HAP-1 (cell line): ENCODE measurements at regions of chr2 and their contacts with region 1.

Region 1: DNA sequence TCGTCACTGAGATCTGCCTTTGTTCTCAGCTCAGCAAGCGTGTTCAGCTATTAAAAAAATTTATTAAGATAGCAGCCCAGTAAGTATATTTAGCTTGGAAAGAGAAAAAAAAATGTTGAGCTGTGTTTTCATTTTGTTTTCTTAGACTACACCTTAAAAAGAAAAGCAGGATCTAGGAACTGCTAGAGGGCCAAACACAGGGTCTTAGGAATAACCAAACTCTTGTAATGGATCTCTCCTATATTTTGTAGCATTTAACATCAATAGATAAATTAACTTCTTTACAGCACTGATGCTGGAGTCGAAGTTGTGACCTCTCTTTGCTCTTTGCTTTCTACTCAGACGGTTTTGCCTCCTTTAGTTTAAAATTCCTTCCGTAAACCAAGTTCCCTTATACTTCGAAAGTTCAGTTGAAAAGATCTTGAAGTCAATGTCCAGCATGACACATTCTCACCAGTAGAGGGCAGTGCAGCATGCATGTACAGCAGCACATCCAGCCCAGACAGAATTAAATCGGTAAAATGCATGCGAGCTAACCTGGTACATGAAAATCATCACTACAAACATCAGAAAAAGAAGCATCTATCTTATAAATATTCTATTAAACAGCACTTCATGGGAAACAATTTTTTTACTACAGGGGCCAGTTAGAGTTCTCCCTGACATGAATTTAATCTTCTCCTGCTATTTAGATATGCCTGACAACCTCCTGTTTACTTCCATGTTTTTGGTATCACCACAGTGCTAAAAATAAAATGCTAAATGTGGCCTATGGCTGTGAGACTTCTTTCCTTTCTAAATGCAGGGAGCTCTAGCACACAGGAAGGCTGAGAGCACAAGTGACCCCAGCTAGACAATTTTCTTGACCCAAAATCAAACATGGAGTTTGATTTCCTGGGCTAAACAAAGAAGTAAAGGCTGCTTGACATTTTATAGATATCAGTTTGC is 48.2 kb upstream of the MAP3K20 start:
- DNase-seq: peak; percentile 66 to 91
- H3K4me3 ChIP-seq: no peak overlapping the region
- H3K4me1 ChIP-seq: no peaks in the 10 kb centered on the region; the same call in 1 of the 2 replicates
- H3K27me3 ChIP-seq: no peaks in the 10 kb centered on the region

Region 2: DNA sequence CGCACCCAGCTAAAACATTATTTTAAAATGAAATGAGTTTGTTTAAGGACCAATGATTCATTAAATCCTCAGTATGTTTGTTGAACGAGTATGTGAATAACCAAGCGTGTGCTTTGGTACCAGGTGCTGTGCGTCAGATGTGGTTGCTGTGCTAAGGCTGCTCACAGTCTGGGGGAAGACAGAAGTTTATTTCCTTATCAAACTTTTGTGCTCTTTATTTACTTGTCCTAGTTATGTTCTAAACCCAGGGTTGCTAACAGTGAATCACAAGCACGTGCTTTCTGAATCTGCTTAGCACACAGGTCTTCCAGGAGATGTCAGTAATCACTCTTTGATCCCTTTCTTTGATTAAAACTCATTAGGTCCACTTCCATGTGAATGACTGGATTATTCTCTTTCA is 254.8 kb before region 1 on chr2:
- in situ Hi-C with region 1: no loop called
- DNase-seq: no peak
- H3K4me3 ChIP-seq: no peak overlapping the region
- H3K4me1 ChIP-seq: no peaks in the 10 kb centered on the region
- H3K27me3 ChIP-seq: no peaks in the 10 kb centered on the region

Region 3: DNA sequence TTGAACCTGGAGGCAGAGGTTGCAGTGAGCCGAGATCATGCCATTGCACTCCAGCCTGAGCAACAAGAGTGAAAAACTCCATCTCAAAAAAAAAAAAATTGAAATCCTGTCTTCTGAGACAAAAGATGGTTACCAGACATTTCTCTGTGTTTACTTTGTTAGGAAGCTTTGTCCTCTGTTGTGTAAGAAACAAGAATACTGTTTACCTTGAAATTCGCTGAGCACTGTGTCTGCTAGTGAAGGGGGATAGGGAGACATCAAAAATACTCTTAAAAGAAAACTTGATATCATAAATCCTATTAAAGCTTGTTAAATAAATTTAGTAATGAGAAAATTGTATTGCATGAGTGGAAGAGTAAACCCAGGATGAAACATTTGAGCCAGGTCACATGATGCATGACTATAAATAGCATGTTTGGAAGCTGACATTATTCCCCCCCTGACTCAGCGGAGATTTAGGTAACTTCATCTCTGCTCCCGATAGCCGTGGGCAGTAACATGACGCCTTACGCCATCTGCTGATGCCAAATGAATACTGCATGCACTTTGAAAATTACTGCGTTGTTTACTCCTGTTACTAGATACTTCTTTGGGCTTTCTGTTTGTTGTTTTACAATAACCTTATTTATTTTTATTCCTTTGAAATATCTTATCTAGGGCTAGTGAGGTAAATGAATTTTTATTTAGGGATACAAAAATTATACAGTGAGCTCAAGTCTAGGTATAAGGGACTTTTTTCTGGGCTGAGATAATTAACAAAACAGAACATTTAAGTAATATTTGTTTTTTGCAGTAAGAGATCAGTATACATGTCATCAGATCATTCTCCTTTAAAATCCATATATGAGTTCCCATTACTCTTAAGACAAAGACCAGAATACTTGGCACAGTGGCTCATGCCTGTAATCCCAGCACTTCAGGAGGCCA is 183.1 kb after region 1 on chr2:
- in situ Hi-C with region 1: loop called (anchors 5 kb)
- DNase-seq: peak; percentile 74 to 77
- H3K4me3 ChIP-seq: no peak overlapping the region
- H3K4me1 ChIP-seq: peaks cover 3% of the 10 kb centered on the region
- H3K27me3 ChIP-seq: no peaks in the 10 kb centered on the region

Region 4: DNA sequence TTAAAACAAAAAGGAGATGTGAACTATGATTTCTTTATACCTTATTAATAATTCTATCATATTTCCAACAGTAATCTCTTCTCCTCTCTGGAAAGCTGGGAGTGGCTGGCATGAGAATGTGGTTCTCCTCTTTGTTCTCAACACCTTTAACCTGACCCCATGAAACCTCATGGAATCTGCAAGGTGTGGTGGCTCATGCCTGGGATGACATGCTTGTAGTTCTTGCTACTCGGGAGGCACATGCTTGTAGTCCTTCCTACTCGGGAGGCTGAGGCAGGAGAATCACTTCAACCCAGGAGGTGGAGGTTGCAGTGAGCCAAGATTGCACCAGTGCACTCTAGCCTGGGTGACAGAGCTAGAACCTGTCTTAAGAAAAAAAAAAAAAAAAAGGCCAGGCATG is 316.5 kb after region 1 on chr2:
- in situ Hi-C with region 1: no loop called
- DNase-seq: no peak
- H3K4me3 ChIP-seq: no peak overlapping the region
- H3K4me1 ChIP-seq: no peaks in the 10 kb centered on the region
- H3K27me3 ChIP-seq: no peaks in the 10 kb centered on the region

Region 5: DNA sequence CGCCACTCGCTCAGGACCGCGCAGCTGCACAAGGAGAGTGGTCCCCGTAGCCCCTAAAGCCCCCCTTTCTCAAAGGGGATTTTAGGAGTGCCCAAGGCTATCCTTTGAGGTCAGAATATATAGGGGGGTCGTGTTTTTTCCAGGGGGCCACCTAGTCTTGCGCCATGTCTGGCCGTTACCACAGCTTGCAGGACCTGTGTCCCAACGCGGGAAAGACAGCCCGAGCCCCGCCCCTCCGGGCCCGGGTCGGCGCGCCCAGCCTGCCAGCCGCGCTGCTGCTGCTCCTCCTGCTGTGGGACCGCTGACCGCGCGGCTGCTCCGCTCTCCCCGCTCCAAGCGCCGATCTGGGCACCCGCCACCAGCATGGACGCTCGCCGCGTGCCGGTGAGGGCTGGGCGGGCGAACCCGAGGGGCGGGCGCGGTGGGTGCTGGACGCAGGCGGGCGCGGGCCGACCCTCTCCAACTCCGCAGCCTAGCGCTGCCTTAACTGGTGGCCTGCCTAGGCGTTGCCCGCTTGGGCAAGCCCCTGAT is 327.2 kb after region 1 on chr2 and contains the start of gene CDCA7:
- in situ Hi-C with region 1: loop called (anchors 25 kb)
- DNase-seq: peak; percentile 72 to 90
- H3K4me3 ChIP-seq: peak within 1 kb of the TSS; percentile 82
- H3K4me1 ChIP-seq: peaks cover 28% of the 10 kb centered on the region
- H3K27me3 ChIP-seq: no peaks in the 10 kb centered on the region